ENCODE measurements at regions of chr1 and their contacts with region 1.

Region 1: GRCh38 chr1:244047621-244048471 is 3.2 kb upstream of the ZBTB18 start:
- DNase-seq: peak; percentile 99
- ATAC-seq: peak; percentile 75
- H3K4me3 ChIP-seq: peak overlapping the region; percentile 71 to 93 (median 82)
- H3K4me3 Mint-ChIP-seq: peak overlapping the region; percentile 94
- H3K27ac ChIP-seq: peak overlapping the region; percentile 99
- H3K27ac Mint-ChIP-seq: peak overlapping the region; percentile 99
- H3K4me1 ChIP-seq: peaks cover 25 to 38% of the 10 kb centered on the region in 2 donors
- H3K4me1 Mint-ChIP-seq: peaks cover 19% of the 10 kb centered on the region
- H3K27me3 ChIP-seq: no peaks in the 10 kb centered on the region
- H3K27me3 Mint-ChIP-seq: no peaks in the 10 kb centered on the region
- CTCF ChIP-seq: no peak

Region 2: DNA sequence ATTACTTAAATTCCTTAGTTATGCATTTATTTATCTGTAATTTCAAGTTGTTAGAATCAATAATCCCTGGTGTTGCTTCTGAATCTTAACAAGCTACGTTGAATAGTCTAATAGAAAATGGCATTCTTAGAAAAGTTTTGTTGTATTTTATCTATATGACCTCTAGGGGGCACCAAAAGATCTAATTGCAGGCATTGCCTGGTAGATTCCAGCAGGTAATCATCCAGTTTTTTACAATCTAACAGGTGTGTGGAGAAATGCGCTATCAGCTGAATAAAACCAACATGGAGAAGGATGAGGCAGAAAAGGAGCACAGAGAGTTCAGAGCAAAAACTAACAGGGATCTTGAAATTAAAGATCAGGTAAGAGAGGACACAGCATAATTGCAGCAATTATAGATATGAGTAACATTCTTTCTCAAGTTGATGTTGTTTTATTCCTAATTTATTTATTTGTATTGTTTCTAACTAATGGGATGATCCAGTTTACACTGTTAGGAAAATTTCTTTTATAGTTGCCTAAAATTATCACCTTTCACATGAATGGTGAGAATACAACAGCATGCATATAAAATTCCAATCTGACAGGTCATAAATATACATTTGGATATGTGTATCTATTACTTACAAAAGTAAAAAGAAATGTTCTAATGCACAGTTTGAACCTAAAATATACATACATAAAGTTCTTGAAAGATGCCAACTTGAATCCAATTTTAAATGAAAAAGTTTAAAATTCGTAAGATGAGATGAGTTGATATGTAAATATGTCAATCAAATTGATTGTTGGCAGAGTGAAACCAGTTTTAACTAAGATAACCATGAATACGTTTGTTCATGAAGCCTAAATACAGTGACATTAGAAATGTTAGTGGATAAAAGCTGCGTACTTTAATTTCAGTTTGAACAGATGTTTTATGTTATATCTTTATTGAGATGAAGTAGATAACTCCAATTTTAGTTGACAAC is 703.6 kb before region 1 on chr1:
- CTCF ChIA-PET with region 1: interaction called, 3 read pairs
- POLR2A ChIA-PET with region 1: no interaction called
- intact Hi-C with region 1: loop called (anchors 2 kb)
- DNase-seq: peak; percentile 68
- ATAC-seq: peak; percentile 21
- H3K4me3 ChIP-seq: no peak overlapping the region
- H3K4me3 Mint-ChIP-seq: no peak overlapping the region
- H3K27ac ChIP-seq: no peak overlapping the region
- H3K27ac Mint-ChIP-seq: no peak overlapping the region
- H3K4me1 ChIP-seq: no peaks in the 10 kb centered on the region
- H3K4me1 Mint-ChIP-seq: no peaks in the 10 kb centered on the region
- H3K27me3 ChIP-seq: no peaks in the 10 kb centered on the region
- H3K27me3 Mint-ChIP-seq: no peaks in the 10 kb centered on the region
- CTCF ChIP-seq: peak; percentile 93

Region 3: GRCh38 chr1:243850452-243851256 is 197.2 kb before region 1 on chr1:
- CTCF ChIA-PET with region 1: no interaction called
- POLR2A ChIA-PET with region 1: interaction called, 20 read pairs
- intact Hi-C with region 1: loop called (anchors 1 kb)
- DNase-seq: peak; percentile 88
- ATAC-seq: peak; percentile 45
- H3K4me3 ChIP-seq: peak overlapping the region; percentile 70 to 82 (median 76)
- H3K4me3 Mint-ChIP-seq: peak overlapping the region; percentile 92
- H3K27ac ChIP-seq: peak overlapping the region; percentile 87 to 98
- H3K27ac Mint-ChIP-seq: peak overlapping the region; percentile 96
- H3K4me1 ChIP-seq: peaks cover 13 to 14% of the 10 kb centered on the region in 2 donors
- H3K4me1 Mint-ChIP-seq: peaks cover 35% of the 10 kb centered on the region
- H3K27me3 ChIP-seq: peaks cover 0 to 3% (median 0%) of the 10 kb centered on the region in 4 experiments
- H3K27me3 Mint-ChIP-seq: peaks cover 15% of the 10 kb centered on the region
- CTCF ChIP-seq: no peak

Region 4: GRCh38 chr1:243968413-243968812 is 79.4 kb before region 1 on chr1:
- CTCF ChIA-PET with region 1: no interaction called
- POLR2A ChIA-PET with region 1: no interaction called
- intact Hi-C with region 1: no loop called
- DNase-seq: no peak
- ATAC-seq: no peak
- H3K4me3 ChIP-seq: no peak overlapping the region
- H3K4me3 Mint-ChIP-seq: no peak overlapping the region
- H3K27ac ChIP-seq: no peak overlapping the region
- H3K27ac Mint-ChIP-seq: no peak overlapping the region
- H3K4me1 ChIP-seq: no peaks in the 10 kb centered on the region
- H3K4me1 Mint-ChIP-seq: no peaks in the 10 kb centered on the region
- H3K27me3 ChIP-seq: peaks cover 0 to 3% (median 0%) of the 10 kb centered on the region in 4 experiments
- H3K27me3 Mint-ChIP-seq: peaks cover 28% of the 10 kb centered on the region
- CTCF ChIP-seq: no peak

Region 5: GRCh38 chr1:244104309-244105060 is 56.6 kb after region 1 on chr1:
- CTCF ChIA-PET with region 1: no interaction called
- POLR2A ChIA-PET with region 1: no interaction called
- intact Hi-C with region 1: loop called (anchors 10 kb)
- DNase-seq: no peak
- ATAC-seq: no peak
- H3K4me3 ChIP-seq: no peak overlapping the region
- H3K4me3 Mint-ChIP-seq: no peak overlapping the region
- H3K27ac ChIP-seq: no peak overlapping the region
- H3K27ac Mint-ChIP-seq: no peak overlapping the region
- H3K4me1 ChIP-seq: peaks cover 8 to 12% of the 10 kb centered on the region in 2 donors
- H3K4me1 Mint-ChIP-seq: peaks cover 14% of the 10 kb centered on the region
- H3K27me3 ChIP-seq: peaks cover 0 to 8% (median 5%) of the 10 kb centered on the region in 4 experiments
- H3K27me3 Mint-ChIP-seq: peaks cover 66% of the 10 kb centered on the region
- CTCF ChIP-seq: no peak

Region 6: GRCh38 chr1:244272471-244273261 is 224.8 kb after region 1 on chr1:
- CTCF ChIA-PET with region 1: interaction called, 10 read pairs
- POLR2A ChIA-PET with region 1: interaction called, 10 read pairs
- intact Hi-C with region 1: loop called (anchors 1 kb)
- DNase-seq: peak; percentile 87
- ATAC-seq: peak; percentile 98
- H3K4me3 ChIP-seq: no peak overlapping the region
- H3K4me3 Mint-ChIP-seq: no peak overlapping the region
- H3K27ac ChIP-seq: no peak overlapping the region
- H3K27ac Mint-ChIP-seq: no peak overlapping the region
- H3K4me1 ChIP-seq: peaks cover 7 to 10% of the 10 kb centered on the region in 2 donors
- H3K4me1 Mint-ChIP-seq: peaks cover 15% of the 10 kb centered on the region
- H3K27me3 ChIP-seq: no peaks in the 10 kb centered on the region
- H3K27me3 Mint-ChIP-seq: no peaks in the 10 kb centered on the region
- CTCF ChIP-seq: peak; percentile 99

Region 7: DNA sequence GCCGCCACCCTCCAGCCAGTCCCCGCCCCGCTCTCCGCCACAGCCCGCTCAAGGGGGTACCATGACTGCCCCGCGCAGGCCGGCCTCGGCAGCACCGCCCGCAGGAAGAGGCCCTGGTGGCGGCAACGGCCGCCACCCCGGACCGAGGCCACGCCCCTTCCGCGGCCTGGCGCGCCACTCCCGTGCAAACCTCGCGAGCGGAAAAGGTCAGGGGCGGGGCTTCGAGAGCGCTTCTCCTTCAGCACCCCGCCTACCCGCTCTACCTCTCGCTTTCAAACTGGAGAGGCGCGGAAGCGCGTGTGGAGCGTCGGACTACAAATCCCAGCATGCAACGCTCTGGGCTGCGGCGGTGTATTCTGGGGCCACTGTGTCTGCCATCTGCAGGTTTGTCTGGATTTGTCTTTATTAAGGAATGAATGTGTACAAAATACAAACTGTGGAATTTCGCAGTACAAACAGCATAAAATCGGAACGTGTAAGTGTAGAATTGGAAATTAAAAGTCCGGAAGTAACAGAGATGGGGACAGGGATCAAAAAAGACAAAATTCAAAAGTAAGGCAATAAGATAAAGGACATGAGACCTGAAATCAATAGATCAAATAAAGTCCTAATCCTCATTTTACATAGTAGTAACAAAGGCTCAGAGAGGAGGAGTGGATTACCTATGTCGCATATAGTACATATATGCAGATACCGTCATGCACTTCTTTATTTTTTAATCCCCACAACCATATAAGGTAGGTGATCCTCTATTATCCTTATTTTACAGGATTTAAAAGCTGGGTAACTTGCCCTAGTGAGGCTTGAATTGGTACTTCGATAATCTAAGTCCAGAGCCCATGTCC is 404.3 kb after region 1 on chr1:
- CTCF ChIA-PET with region 1: no interaction called
- POLR2A ChIA-PET with region 1: interaction called, 7 read pairs
- intact Hi-C with region 1: loop called (anchors 1 kb)
- DNase-seq: peak; percentile 100
- ATAC-seq: peak; percentile 92
- H3K4me3 ChIP-seq: peak overlapping the region in 4 of 5 experiments; percentile 88 to 98 (median 93)
- H3K4me3 Mint-ChIP-seq: peak overlapping the region; percentile 95
- H3K27ac ChIP-seq: peak overlapping the region; percentile 92 to 94
- H3K27ac Mint-ChIP-seq: peak overlapping the region; percentile 94
- H3K4me1 ChIP-seq: peaks cover 17 to 18% of the 10 kb centered on the region in 2 donors
- H3K4me1 Mint-ChIP-seq: peaks cover 35% of the 10 kb centered on the region
- H3K27me3 ChIP-seq: no peaks in the 10 kb centered on the region
- H3K27me3 Mint-ChIP-seq: no peaks in the 10 kb centered on the region
- CTCF ChIP-seq: peak; percentile 47

Region 8: GRCh38 chr1:244835276-244836134 is 787.7 kb after region 1 on chr1 and contains the start of gene COX20:
- CTCF ChIA-PET with region 1: no interaction called
- POLR2A ChIA-PET with region 1: interaction called, 3 read pairs
- intact Hi-C with region 1: loop called (anchors 10 kb)
- DNase-seq: peak; percentile 97
- ATAC-seq: peak; percentile 69
- H3K4me3 ChIP-seq: peak within 1 kb of the TSS; percentile 89 to 98 (median 94)
- H3K4me3 Mint-ChIP-seq: peak within 1 kb of the TSS; percentile 100
- H3K27ac ChIP-seq: peak within 1 kb of the TSS; percentile 97
- H3K27ac Mint-ChIP-seq: peak within 1 kb of the TSS; percentile 100
- H3K4me1 ChIP-seq: peaks cover 21 to 27% of the 10 kb centered on the region in 2 donors
- H3K4me1 Mint-ChIP-seq: peaks cover 59% of the 10 kb centered on the region
- H3K27me3 ChIP-seq: no peaks in the 10 kb centered on the region
- H3K27me3 Mint-ChIP-seq: no peaks in the 10 kb centered on the region
- CTCF ChIP-seq: peak; percentile 13
- total RNA-seq, gene COX20: 35.7 and 37.7 TPM in 2 replicates

Measured in B cell (primary cell).